Activated CD4-positive, alpha-beta T cell treated with anti-CD3 and anti-CD28 coated beads, Interleukin-2, amount 10 ng/mL, durations not matched to agents 7 days and 5 days (primary cell): ENCODE measurements at regions of chr1 and their contacts with region 1.

Region 1: DNA sequence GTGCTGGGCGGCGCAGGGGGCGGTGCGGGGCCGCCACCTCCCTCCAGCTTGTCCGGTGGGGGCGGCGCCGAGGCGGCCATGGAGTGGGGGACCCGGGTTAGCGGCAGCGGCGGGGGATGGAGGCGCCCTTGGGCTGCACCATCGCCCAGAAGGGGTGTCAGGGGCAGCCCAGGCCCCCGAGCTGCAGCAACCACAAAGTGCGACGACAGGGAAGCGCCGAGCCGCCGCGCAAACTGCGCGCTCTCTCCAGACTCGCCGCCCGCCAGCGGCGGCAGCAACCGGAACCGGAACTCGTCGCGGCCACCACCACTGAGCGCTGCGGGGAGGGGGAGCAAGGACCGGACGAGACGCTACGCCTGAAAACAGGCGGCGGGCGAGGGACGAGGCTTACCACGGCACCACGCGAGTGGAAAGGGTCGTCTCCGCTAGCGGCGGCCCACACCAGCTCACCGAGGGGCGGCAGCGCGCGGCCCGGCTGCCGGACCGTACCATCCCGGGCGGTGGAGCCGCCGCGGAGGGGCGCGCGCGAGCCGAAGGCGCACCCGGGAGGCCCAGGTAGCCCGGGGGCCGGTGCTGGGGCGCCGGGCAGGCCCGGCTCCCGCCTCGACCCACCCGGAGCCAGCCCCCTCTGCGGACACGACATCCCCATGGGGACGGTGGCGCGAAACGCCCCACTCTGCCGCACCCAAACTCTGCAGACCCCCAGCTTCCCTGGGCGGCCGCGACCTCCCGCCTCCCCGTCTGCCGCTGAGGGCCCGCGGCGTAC is at the start of gene PYGO2:
- DNase-seq: peak; percentile 83
- H3K4me3 Mint-ChIP-seq: peak within 1 kb of the TSS; percentile 99
- H3K27ac Mint-ChIP-seq: peak within 1 kb of the TSS; percentile 93
- H3K4me1 Mint-ChIP-seq: peaks cover 53% of the 10 kb centered on the region
- H3K27me3 Mint-ChIP-seq: no peaks in the 10 kb centered on the region
- total RNA-seq, gene PYGO2: 50.0 to 50.2 TPM

Region 2: GRCh38 chr1:154974063-154974807 is 12.6 kb after region 1 on chr1 and contains the start of gene CKS1B:
- CTCF ChIA-PET with region 1: interaction called, 23 read pairs
- POLR2A ChIA-PET with region 1: interaction called, 5 read pairs
- DNase-seq: peak; percentile 98
- H3K4me3 Mint-ChIP-seq: no peak within 1 kb of the TSS
- H3K27ac Mint-ChIP-seq: no peak within 1 kb of the TSS
- H3K4me1 Mint-ChIP-seq: peaks cover 40% of the 10 kb centered on the region
- H3K27me3 Mint-ChIP-seq: no peaks in the 10 kb centered on the region
- total RNA-seq, gene CKS1B: 147 to 157 TPM

Region 3: DNA sequence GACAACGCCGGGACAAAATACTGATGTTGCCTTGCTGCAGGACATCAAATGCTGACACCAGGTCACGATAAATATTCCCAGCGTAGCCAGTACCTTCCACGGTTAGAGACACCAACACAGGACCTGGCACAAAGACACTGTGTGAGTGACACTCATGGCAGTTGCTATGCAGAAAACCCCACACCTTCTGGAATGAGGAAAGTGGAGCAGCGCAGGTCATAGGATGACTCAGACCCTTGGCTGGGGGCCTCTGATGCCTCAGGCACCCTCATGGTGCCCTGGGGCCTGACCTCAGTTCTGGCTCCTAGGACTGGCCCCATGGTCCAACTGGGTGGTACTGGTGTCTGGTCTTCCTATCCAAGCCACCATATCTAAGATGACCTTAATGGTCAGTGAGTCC is 64.9 kb after region 1 on chr1:
- CTCF ChIA-PET with region 1: no interaction called
- POLR2A ChIA-PET with region 1: no interaction called
- DNase-seq: no peak
- H3K4me3 Mint-ChIP-seq: no peak overlapping the region
- H3K27ac Mint-ChIP-seq: no peak overlapping the region
- H3K4me1 Mint-ChIP-seq: peaks cover 6% of the 10 kb centered on the region
- H3K27me3 Mint-ChIP-seq: peaks cover 3% of the 10 kb centered on the region